Activated CD4-positive, alpha-beta memory T cell treated with anti-CD3 and anti-CD28 coated beads for 36 hours (primary cell): ENCODE measurements at regions of chr9 and their contacts with region 1.

Region 1: DNA sequence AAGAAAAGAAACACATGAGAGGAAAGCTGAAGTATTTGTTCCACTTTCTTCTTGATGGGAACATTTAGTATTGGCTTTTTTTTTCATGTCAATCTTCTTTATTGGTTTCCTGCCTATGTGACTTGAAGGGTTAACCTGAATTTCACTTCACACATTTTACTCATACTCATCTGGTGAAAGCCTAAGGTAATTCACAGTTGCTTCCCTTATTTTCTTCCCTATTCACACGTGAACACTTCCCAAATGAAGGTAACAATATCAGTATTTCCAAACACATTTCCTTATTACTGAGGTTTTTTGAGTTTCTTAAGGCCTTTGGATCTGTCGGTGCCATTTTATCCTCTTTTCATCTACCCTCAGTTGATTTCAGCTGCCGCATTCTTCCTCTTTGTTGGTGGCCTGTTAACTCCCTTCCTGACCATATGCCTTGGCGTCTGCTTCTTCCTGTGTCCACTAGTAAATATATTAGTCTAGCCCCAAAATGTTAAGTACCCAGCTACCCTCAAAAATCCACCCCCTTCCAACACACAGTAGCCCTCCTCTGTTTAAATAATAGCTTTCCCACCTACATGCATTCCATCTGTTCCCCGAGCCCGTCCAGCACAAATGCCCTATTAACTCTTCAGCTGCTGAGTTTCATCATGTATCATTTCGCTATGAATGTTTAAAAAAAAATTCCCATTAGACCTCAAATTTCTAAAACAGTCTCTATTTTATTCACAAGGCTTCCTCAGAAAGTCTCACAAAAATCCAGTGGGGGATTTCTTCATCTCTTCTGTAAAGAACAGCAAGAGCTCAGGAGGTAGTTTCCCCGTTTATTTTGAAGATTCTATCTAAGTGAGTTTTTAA is 97.3 kb downstream of the USP20 start:
- DNase-seq: no peak
- H3K4me3 Mint-ChIP-seq: peak overlapping the region; percentile 48
- H3K27ac Mint-ChIP-seq: peak overlapping the region; percentile 87
- H3K4me1 Mint-ChIP-seq: peaks cover 67% of the 10 kb centered on the region
- H3K27me3 Mint-ChIP-seq: no peaks in the 10 kb centered on the region

Region 2: GRCh38 chr9:129889941-129890717 is 42.4 kb before region 1 on chr9:
- CTCF ChIA-PET with region 1: interaction called, 9 read pairs
- POLR2A ChIA-PET with region 1: interaction called, 25 read pairs
- intact Hi-C with region 1: loop called (anchors 1 kb)
- DNase-seq: peak; percentile 92
- H3K4me3 Mint-ChIP-seq: peak overlapping the region; percentile 93
- H3K27ac Mint-ChIP-seq: peak overlapping the region; percentile 97
- H3K4me1 Mint-ChIP-seq: peaks cover 83% of the 10 kb centered on the region
- H3K27me3 Mint-ChIP-seq: no peaks in the 10 kb centered on the region

Region 3: GRCh38 chr9:129944506-129945116 is 12.1 kb after region 1 on chr9:
- CTCF ChIA-PET with region 1: interaction called, 8 read pairs
- POLR2A ChIA-PET with region 1: interaction called, 5 read pairs
- intact Hi-C with region 1: loop called (anchors 1 kb)
- DNase-seq: peak; percentile 76
- H3K4me3 Mint-ChIP-seq: peak overlapping the region; percentile 12
- H3K27ac Mint-ChIP-seq: peak overlapping the region; percentile 71
- H3K4me1 Mint-ChIP-seq: peaks cover 49% of the 10 kb centered on the region
- H3K27me3 Mint-ChIP-seq: no peaks in the 10 kb centered on the region

Region 4: GRCh38 chr9:129954868-129955550 is 22.5 kb after region 1 on chr9:
- CTCF ChIA-PET with region 1: interaction called, 4 read pairs
- POLR2A ChIA-PET with region 1: interaction called, 12 read pairs
- intact Hi-C with region 1: no loop called
- DNase-seq: no peak
- H3K4me3 Mint-ChIP-seq: no peak overlapping the region
- H3K27ac Mint-ChIP-seq: peak overlapping the region; percentile 54
- H3K4me1 Mint-ChIP-seq: peaks cover 51% of the 10 kb centered on the region
- H3K27me3 Mint-ChIP-seq: no peaks in the 10 kb centered on the region